ENCODE measurements at regions of chr14 and their contacts with region 1.

Region 1: GRCh38 chr14:72516936-72517700 is 376.8 kb downstream of the DPF3 start:
- DNase-seq: peak in 1 of 2 experiments; percentile 68
- ATAC-seq: peak; percentile 52 to 85; a peak in 4 of 6 replicates
- H3K4me3 ChIP-seq: no peak overlapping the region
- H3K27ac ChIP-seq: no peak overlapping the region
- H3K4me1 ChIP-seq: no peaks in the 10 kb centered on the region
- CTCF ChIP-seq: peak; percentile 86
- EP300 ChIP-seq: no peak
- POLR2A ChIP-seq: no peak
- RAD21 ChIP-seq: peak; percentile 92 to 93

Region 2: GRCh38 chr14:72495664-72496264 is 21.4 kb before region 1 on chr14:
- CTCF ChIA-PET with region 1: interaction called, 71 read pairs
- POLR2A ChIA-PET with region 1: no interaction called
- DNase-seq: no peak
- ATAC-seq: no peak
- H3K4me3 ChIP-seq: no peak overlapping the region
- H3K27ac ChIP-seq: no peak overlapping the region
- H3K4me1 ChIP-seq: no peaks in the 10 kb centered on the region
- CTCF ChIP-seq: no peak
- EP300 ChIP-seq: no peak
- POLR2A ChIP-seq: no peak
- RAD21 ChIP-seq: no peak

Region 3: DNA sequence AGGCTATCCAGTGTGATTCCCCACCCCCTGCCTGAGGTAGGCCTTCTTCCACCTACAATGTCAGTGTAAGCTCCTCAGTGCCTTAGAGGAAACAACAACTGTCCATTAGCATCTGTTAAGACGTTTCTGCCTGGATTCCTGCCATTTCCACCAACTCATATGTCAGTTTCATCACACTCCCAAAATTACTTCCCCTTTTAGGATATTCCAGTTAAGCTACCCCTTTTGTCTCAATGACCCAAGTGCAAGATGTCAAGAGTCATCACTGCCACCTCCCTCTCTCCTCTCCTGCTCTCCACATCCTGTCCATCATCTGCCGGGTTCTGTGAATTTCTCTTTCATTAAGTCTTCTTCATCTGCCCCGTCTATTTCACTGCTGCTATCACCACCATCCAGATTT is 187.4 kb after region 1 on chr14:
- CTCF ChIA-PET with region 1: interaction called, 10 read pairs
- POLR2A ChIA-PET with region 1: no interaction called
- DNase-seq: no peak
- ATAC-seq: no peak
- H3K4me3 ChIP-seq: no peak overlapping the region
- H3K27ac ChIP-seq: no peak overlapping the region
- H3K4me1 ChIP-seq: peaks cover 3% of the 10 kb centered on the region; the same call in 1 of the 3 replicates
- CTCF ChIP-seq: no peak
- EP300 ChIP-seq: no peak
- POLR2A ChIP-seq: no peak
- RAD21 ChIP-seq: no peak

Region 4: GRCh38 chr14:72904840-72905561 is 387.9 kb after region 1 on chr14:
- CTCF ChIA-PET with region 1: interaction called, 480 read pairs
- POLR2A ChIA-PET with region 1: no interaction called
- DNase-seq: peak; percentile 69 to 73
- ATAC-seq: peak; percentile 67 to 86
- H3K4me3 ChIP-seq: no peak overlapping the region
- H3K27ac ChIP-seq: no peak overlapping the region
- H3K4me1 ChIP-seq: peaks cover 15% of the 10 kb centered on the region; the same call in 1 of the 3 replicates
- CTCF ChIP-seq: peak; percentile 96
- EP300 ChIP-seq: no peak
- POLR2A ChIP-seq: no peak
- RAD21 ChIP-seq: peak; percentile 95 to 97

Region 5: GRCh38 chr14:72942782-72943333 is 425.7 kb after region 1 on chr14:
- CTCF ChIA-PET with region 1: interaction called, 201 read pairs
- POLR2A ChIA-PET with region 1: interaction called, 6 read pairs
- DNase-seq: no peak
- ATAC-seq: no peak
- H3K4me3 ChIP-seq: no peak overlapping the region
- H3K27ac ChIP-seq: no peak overlapping the region
- H3K4me1 ChIP-seq: no peaks in the 10 kb centered on the region
- CTCF ChIP-seq: no peak
- EP300 ChIP-seq: no peak
- POLR2A ChIP-seq: no peak
- RAD21 ChIP-seq: peak in 1 of 2 experiments; percentile 38; a peak in 2 of 5 replicates

Measured in A549 (cell line).